T-cell (primary cell): ENCODE measurements at regions of chr5 and their contacts with region 1.

Region 1: DNA sequence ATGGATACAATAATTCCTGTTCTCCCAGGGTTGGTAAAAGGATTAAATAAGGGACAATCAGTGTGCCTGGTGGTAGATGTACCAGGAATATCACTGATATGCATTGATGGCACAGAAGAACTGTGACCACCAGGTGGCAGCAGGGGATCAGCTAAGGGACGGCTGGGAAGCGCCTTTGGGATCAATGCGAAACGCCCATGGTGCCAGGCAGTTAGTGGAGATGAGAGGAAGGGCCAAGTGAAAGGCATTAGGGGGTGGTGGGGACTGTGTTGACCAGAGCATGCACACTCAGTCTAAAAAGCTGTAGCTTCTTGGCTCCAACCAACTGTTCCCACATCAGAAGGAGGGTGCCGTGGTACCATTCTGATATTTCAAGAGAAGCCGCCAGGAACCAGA is 55.6 kb downstream of the ARHGEF37 start:
- DNase-seq: peak in 24 of 35 experiments; percentile 1 to 78 (median 46)
- ATAC-seq: peak; percentile 64 to 69 (median 66)
- H3K4me3 ChIP-seq: no peak overlapping the region
- H3K4me3 Mint-ChIP-seq: no peak overlapping the region
- H3K27ac ChIP-seq: no peak overlapping the region
- H3K27ac Mint-ChIP-seq: no peak overlapping the region
- H3K4me1 ChIP-seq: peaks cover 0 to 3% of the 10 kb centered on the region in 2 experiments
- H3K4me1 Mint-ChIP-seq: no peaks in the 10 kb centered on the region
- H3K27me3 ChIP-seq: no peaks in the 10 kb centered on the region
- H3K27me3 Mint-ChIP-seq: no peaks in the 10 kb centered on the region

Region 2: GRCh38 chr5:149094981-149095380 is 541.9 kb before region 1 on chr5:
- CTCF ChIA-PET with region 1: no interaction called
- POLR2A ChIA-PET with region 1: no interaction called
- DNase-seq: no peak
- ATAC-seq: no peak
- H3K4me3 ChIP-seq: no peak overlapping the region
- H3K4me3 Mint-ChIP-seq: no peak overlapping the region
- H3K27ac ChIP-seq: no peak overlapping the region
- H3K27ac Mint-ChIP-seq: no peak overlapping the region
- H3K4me1 ChIP-seq: no peaks in the 10 kb centered on the region
- H3K4me1 Mint-ChIP-seq: no peaks in the 10 kb centered on the region
- H3K27me3 ChIP-seq: peaks cover 0 to 24% of the 10 kb centered on the region in 2 experiments
- H3K27me3 Mint-ChIP-seq: peaks cover 21 to 26% of the 10 kb centered on the region in 2 donors

Region 3: GRCh38 chr5:149616727-149617285 is 20.0 kb before region 1 on chr5:
- CTCF ChIA-PET with region 1: no interaction called
- POLR2A ChIA-PET with region 1: no interaction called
- DNase-seq: no peak
- ATAC-seq: peak in 1 of 4 experiments; percentile 26
- H3K4me3 ChIP-seq: no peak overlapping the region
- H3K4me3 Mint-ChIP-seq: no peak overlapping the region
- H3K27ac ChIP-seq: no peak overlapping the region
- H3K27ac Mint-ChIP-seq: no peak overlapping the region
- H3K4me1 ChIP-seq: no peaks in the 10 kb centered on the region
- H3K4me1 Mint-ChIP-seq: no peaks in the 10 kb centered on the region
- H3K27me3 ChIP-seq: peaks cover 0 to 2% of the 10 kb centered on the region in 2 experiments
- H3K27me3 Mint-ChIP-seq: no peaks in the 10 kb centered on the region

Region 4: GRCh38 chr5:149680810-149681221 is 44.0 kb after region 1 on chr5:
- CTCF ChIA-PET with region 1: no interaction called
- POLR2A ChIA-PET with region 1: no interaction called
- DNase-seq: peak in 3 of 35 experiments; percentile 3 to 27 (median 5)
- ATAC-seq: peak in 1 of 4 experiments; percentile 35
- H3K4me3 ChIP-seq: no peak overlapping the region
- H3K4me3 Mint-ChIP-seq: no peak overlapping the region
- H3K27ac ChIP-seq: no peak overlapping the region
- H3K27ac Mint-ChIP-seq: no peak overlapping the region
- H3K4me1 ChIP-seq: no peaks in the 10 kb centered on the region
- H3K4me1 Mint-ChIP-seq: no peaks in the 10 kb centered on the region
- H3K27me3 ChIP-seq: peaks cover 0 to 27% of the 10 kb centered on the region in 2 experiments
- H3K27me3 Mint-ChIP-seq: peaks cover 30 to 31% of the 10 kb centered on the region in 2 donors

Region 5: DNA sequence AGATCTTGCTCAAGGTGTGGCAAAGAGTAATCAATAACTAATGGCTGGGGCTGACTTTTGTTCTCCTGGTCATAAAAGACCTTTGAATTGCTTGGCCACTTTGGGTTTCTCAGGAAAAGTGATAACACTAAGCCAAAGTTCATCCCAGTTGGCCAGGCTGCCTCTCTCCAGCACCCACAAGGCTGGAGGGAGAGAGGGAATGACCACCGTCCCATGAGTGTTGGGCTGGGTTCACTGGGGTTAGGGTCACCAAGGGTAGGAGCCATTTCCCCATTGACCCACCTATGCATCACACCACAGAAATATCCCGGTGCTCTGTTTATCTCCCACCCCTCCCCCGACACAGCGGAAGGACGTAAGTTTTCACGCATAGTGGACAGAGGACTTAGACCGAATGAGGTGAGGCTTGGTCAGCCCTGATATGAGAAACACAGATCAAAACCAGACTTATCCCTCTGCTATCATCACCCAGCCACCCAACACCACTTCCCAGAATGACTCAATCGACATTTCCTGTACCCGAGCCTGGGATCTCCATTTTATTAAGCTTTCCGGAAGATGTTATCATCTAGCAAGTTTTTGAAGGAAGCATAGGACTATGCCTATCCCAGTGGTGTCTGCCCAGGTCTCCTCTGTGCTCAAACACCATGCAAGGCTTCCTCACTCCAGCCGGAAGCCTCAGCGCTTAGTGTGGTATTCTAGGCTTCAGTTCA is 66.2 kb after region 1 on chr5:
- CTCF ChIA-PET with region 1: no interaction called
- POLR2A ChIA-PET with region 1: no interaction called
- DNase-seq: no peak
- ATAC-seq: no peak
- H3K4me3 ChIP-seq: no peak overlapping the region
- H3K4me3 Mint-ChIP-seq: no peak overlapping the region
- H3K27ac ChIP-seq: no peak overlapping the region
- H3K27ac Mint-ChIP-seq: no peak overlapping the region
- H3K4me1 ChIP-seq: no peaks in the 10 kb centered on the region
- H3K4me1 Mint-ChIP-seq: no peaks in the 10 kb centered on the region
- H3K27me3 ChIP-seq: peaks cover 2 to 5% of the 10 kb centered on the region in 2 experiments
- H3K27me3 Mint-ChIP-seq: peaks cover 19 to 26% of the 10 kb centered on the region in 2 donors

Region 6: GRCh38 chr5:149828161-149828884 is 191.5 kb after region 1 on chr5:
- CTCF ChIA-PET with region 1: interaction called, 8 to 37 read pairs
- POLR2A ChIA-PET with region 1: interaction called in 1 of 2 experiments, 3 read pairs
- DNase-seq: peak; percentile 37 to 89 (median 74)
- ATAC-seq: peak; percentile 66 to 78 (median 74)
- H3K4me3 ChIP-seq: no peak overlapping the region
- H3K4me3 Mint-ChIP-seq: no peak overlapping the region
- H3K27ac ChIP-seq: no peak overlapping the region
- H3K27ac Mint-ChIP-seq: no peak overlapping the region
- H3K4me1 ChIP-seq: no peaks in the 10 kb centered on the region
- H3K4me1 Mint-ChIP-seq: no peaks in the 10 kb centered on the region
- H3K27me3 ChIP-seq: no peaks in the 10 kb centered on the region
- H3K27me3 Mint-ChIP-seq: no peaks in the 10 kb centered on the region